HepG2 (cell line): ENCODE measurements at regions of chr1 and their contacts with region 1.

Region 1: DNA sequence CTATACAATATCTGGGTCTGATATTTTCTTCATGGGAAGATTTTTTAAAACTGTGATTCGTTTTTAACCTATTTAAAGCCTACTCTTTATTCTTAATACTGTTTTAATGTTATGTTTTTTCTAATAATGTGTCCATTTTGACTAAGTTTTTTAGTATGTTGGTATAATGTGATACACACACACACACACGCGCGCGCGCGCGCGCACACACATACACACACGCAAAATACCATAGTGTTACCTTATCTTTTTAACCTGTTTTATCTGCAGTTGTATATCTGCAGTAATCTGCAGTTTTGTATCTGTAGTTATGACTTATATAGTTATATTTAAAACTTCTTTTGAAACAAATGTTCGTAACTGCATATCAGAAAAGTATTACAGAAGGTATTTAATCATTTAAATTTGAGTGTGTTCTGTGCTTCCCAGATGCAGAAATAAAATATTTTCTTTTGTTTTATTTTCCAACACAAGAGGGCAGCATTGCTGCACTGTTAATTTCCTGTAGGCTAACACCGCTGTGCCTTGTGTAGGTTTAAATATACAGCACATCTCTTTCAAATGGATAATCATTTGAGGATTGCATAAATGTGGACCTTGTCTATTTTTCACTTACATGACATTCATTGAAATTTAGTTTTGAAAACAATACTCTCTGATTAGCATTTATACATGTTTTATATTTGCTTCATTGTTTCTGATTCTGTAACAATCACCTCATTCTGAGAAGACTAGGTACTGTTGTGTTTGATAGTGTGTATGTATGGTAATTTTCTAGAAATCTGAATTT is 166.1 kb downstream of the PDE4B start:
- DNase-seq: peak; percentile 16
- ATAC-seq: peak; percentile 67
- H3K4me3 ChIP-seq: no peak overlapping the region
- H3K27ac ChIP-seq: no peak overlapping the region
- H3K4me1 ChIP-seq: no peaks in the 10 kb centered on the region
- H3K27me3 ChIP-seq: no peaks in the 10 kb centered on the region; a peak in 1 of 5 replicates
- CTCF ChIP-seq: peak; percentile 73
- EP300 ChIP-seq: no peak
- POLR2A ChIP-seq: no peak
- RAD21 ChIP-seq: peak; percentile 47; the same call in 1 of the 2 replicates

Region 2: GRCh38 chr1:66242646-66243547 is 284.1 kb after region 1 on chr1:
- CTCF ChIA-PET with region 1: interaction called, 89 read pairs
- POLR2A ChIA-PET with region 1: no interaction called
- in situ Hi-C with region 1: loop called (anchors 5 kb)
- intact Hi-C with region 1: loop called (anchors 1 kb)
- DNase-seq: peak; percentile 75
- ATAC-seq: peak; percentile 100
- H3K4me3 ChIP-seq: no peak overlapping the region
- H3K27ac ChIP-seq: no peak overlapping the region
- H3K4me1 ChIP-seq: no peaks in the 10 kb centered on the region
- H3K27me3 ChIP-seq: no peaks in the 10 kb centered on the region
- CTCF ChIP-seq: peak; percentile 97
- EP300 ChIP-seq: no peak
- POLR2A ChIP-seq: no peak
- RAD21 ChIP-seq: peak; percentile 90

Region 3: GRCh38 chr1:66446261-66447001 is 487.7 kb after region 1 on chr1:
- CTCF ChIA-PET with region 1: interaction called, 16 read pairs
- POLR2A ChIA-PET with region 1: no interaction called
- in situ Hi-C with region 1: loop called (anchors 25 kb)
- intact Hi-C with region 1: loop called (anchors 1 kb)
- DNase-seq: peak; percentile 47
- ATAC-seq: peak; percentile 77; the same call in 2 of the 3 replicates
- H3K4me3 ChIP-seq: no peak overlapping the region
- H3K27ac ChIP-seq: no peak overlapping the region
- H3K4me1 ChIP-seq: no peaks in the 10 kb centered on the region
- H3K27me3 ChIP-seq: no peaks in the 10 kb centered on the region
- CTCF ChIP-seq: peak; percentile 78
- EP300 ChIP-seq: no peak
- POLR2A ChIP-seq: no peak
- RAD21 ChIP-seq: no peak

Region 4: GRCh38 chr1:66464802-66465201 is 506.0 kb after region 1 on chr1:
- CTCF ChIA-PET with region 1: no interaction called
- POLR2A ChIA-PET with region 1: no interaction called
- in situ Hi-C with region 1: loop called (anchors 25 kb)
- intact Hi-C with region 1: no loop called
- DNase-seq: no peak
- ATAC-seq: no peak
- H3K4me3 ChIP-seq: no peak overlapping the region
- H3K27ac ChIP-seq: no peak overlapping the region
- H3K4me1 ChIP-seq: no peaks in the 10 kb centered on the region
- H3K27me3 ChIP-seq: no peaks in the 10 kb centered on the region
- CTCF ChIP-seq: no peak
- EP300 ChIP-seq: no peak
- POLR2A ChIP-seq: no peak
- RAD21 ChIP-seq: no peak